ENCODE measurements at regions of chr7 and their contacts with region 1.

Region 1: DNA sequence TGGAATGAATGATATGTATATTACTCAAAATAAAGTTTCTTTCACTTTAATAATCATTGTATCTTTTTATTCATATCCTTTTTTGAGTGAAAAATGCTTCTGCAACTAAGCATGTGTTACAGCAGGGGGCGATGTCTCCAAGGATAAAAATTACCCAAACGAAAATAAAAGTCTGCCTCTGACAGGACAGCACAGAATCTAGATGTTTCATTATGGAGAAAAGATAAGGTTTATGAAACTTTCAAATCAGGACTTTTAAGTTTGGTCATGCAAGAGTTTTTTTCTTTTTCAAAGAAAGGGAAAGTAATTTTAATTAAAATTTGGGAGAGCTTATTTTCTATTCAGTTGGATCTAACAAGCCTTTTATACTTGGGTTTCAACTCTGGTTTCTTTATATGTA is 48.4 kb downstream of the TES start:
- H3K4me3 Mint-ChIP-seq: no peak overlapping the region
- H3K27ac Mint-ChIP-seq: no peak overlapping the region
- H3K4me1 Mint-ChIP-seq: no peaks in the 10 kb centered on the region
- H3K27me3 Mint-ChIP-seq: peaks cover 2% of the 10 kb centered on the region

Region 2: GRCh38 chr7:116525913-116526861 is 267.5 kb after region 1 on chr7:
- intact Hi-C with region 1: loop called (anchors 2 kb)
- H3K4me3 Mint-ChIP-seq: peak overlapping the region; percentile 86
- H3K27ac Mint-ChIP-seq: no peak overlapping the region
- H3K4me1 Mint-ChIP-seq: peaks cover 31% of the 10 kb centered on the region
- H3K27me3 Mint-ChIP-seq: peaks cover 57% of the 10 kb centered on the region

Region 3: GRCh38 chr7:116588641-116589594 is 330.2 kb after region 1 on chr7:
- intact Hi-C with region 1: loop called (anchors 1 kb)
- H3K4me3 Mint-ChIP-seq: no peak overlapping the region
- H3K27ac Mint-ChIP-seq: no peak overlapping the region
- H3K4me1 Mint-ChIP-seq: peaks cover 30% of the 10 kb centered on the region
- H3K27me3 Mint-ChIP-seq: peaks cover 23% of the 10 kb centered on the region

Measured in dendritic cell treated with granulocyte-macrophage colony-stimulating factor and Interleukin-4, amounts not matched to agents 40 ng/mL and 50 ng/mL, for 4 days (primary cell).